ENCODE measurements at regions of chr6 and their contacts with region 1.

Region 1: DNA sequence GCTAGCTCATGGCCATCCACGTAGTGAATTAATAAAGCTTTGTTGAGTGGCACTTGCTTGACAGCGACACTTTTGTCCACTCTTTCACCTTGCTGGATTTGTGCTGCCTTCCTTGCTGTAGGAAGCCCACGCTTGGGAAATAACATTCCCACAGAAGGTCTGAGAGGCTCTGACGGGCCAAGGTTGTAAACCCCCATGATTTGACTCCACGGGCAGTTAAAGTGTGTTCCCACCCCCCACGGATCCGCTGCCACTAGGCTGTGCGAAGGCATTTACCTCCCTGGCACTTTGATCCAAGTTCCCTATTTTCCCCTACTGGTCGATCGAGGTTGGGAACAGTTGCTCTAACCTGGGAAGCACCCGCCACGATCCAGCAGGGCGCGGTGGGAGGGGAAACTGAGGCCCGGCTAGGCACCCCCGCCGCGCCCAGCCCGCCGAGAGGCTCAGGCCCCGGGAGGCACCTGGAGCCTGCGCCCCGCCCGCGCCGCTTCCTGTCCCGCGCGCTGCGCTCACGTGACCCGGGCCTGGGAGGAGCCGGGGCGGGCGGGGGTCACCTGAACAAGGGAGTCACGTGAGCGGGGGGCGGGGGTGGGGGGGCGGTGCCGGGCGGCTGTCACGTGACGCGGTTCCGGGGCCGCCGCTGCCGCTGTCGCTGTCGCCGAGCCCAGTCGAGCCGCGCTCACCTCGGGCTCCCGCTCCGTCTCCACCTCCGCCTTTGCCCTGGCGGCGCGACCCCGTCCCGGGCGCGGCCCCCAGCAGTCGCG is at the start of gene IGF2R:
- DNase-seq: peak; percentile 86 to 96 (median 94)
- ATAC-seq: peak; percentile 85
- H3K4me3 ChIP-seq: peak within 1 kb of the TSS; percentile 64 to 67
- H3K4me3 Mint-ChIP-seq: peak within 1 kb of the TSS; percentile 91
- H3K27ac ChIP-seq: peak within 1 kb of the TSS; percentile 59 to 82
- H3K27ac Mint-ChIP-seq: peak within 1 kb of the TSS; percentile 89
- H3K4me1 ChIP-seq: peaks cover 36% of the 10 kb centered on the region
- H3K4me1 Mint-ChIP-seq: peaks cover 42% of the 10 kb centered on the region
- H3K27me3 ChIP-seq: no peaks in the 10 kb centered on the region
- H3K27me3 Mint-ChIP-seq: no peaks in the 10 kb centered on the region
- CTCF ChIP-seq: no peak
- total RNA-seq, gene IGF2R: 38.5 to 40.6 TPM

Region 2: DNA sequence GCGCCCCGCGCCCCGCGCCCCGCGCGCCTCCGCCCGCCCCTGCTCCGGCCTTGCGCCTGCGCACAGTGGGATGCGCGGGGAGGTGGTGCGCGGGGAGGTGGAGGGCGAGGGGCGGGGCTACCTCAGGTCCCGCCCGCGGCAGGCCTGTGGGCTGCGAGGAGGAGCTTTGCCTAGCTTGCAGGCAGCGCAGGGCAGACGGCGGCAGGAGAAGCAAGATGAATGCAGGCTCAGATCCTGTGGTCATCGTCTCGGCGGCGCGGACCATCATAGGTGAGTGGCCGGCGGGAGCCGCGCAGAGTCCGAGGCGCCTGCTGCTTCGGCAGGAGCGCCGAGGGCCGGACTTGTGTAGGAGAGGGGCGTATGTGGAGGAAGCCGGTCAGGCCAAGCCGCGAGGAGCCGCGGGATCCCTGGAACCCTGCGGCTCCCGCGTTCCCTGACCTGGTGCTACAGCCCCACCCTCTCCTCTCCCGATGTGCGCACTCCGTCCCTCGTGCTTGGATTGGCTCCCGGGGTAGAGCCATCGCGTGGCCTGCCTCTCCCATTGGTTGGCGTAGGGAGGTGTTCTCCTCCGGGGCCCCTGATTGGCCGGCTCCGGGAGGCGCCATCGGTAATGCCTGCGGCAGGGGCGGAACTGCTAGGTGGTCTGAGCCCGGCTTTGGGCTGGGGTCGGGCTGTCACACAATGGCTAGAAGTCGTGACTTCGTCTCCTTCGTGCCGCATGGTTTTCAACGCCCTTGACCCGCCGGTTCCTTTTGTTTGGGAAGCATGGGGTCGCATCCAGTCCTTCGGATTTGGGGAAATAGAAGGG is 206.5 kb before region 1 on chr6 and contains the start of gene ACAT2:
- CTCF ChIA-PET with region 1: no interaction called
- POLR2A ChIA-PET with region 1: no interaction called
- intact Hi-C with region 1: loop called in 1 of 2 experiments (anchors 2 kb)
- DNase-seq: peak; percentile 81 to 96 (median 91)
- ATAC-seq: peak; percentile 86
- H3K4me3 ChIP-seq: peak within 1 kb of the TSS; percentile 85 to 99
- H3K4me3 Mint-ChIP-seq: peak within 1 kb of the TSS; percentile 96
- H3K27ac ChIP-seq: peak within 1 kb of the TSS; percentile 97 to 99
- H3K27ac Mint-ChIP-seq: peak within 1 kb of the TSS; percentile 97
- H3K4me1 ChIP-seq: peaks cover 16% of the 10 kb centered on the region
- H3K4me1 Mint-ChIP-seq: peaks cover 29% of the 10 kb centered on the region
- H3K27me3 ChIP-seq: no peaks in the 10 kb centered on the region
- H3K27me3 Mint-ChIP-seq: no peaks in the 10 kb centered on the region
- CTCF ChIP-seq: no peak
- total RNA-seq, gene ACAT2: 23.3 to 24.1 TPM

Region 3: GRCh38 chr6:159979136-159979874 is 10.7 kb after region 1 on chr6:
- CTCF ChIA-PET with region 1: interaction called, 6 read pairs
- POLR2A ChIA-PET with region 1: interaction called, 11 read pairs
- intact Hi-C with region 1: loop called in 1 of 2 experiments (anchors 2 kb)
- DNase-seq: peak in 7 of 9 experiments; percentile 49 to 85 (median 62)
- ATAC-seq: peak; percentile 79
- H3K4me3 ChIP-seq: peak overlapping the region in 1 of 2 experiments; percentile 16
- H3K4me3 Mint-ChIP-seq: peak overlapping the region; percentile 70
- H3K27ac ChIP-seq: peak overlapping the region; percentile 29 to 87
- H3K27ac Mint-ChIP-seq: peak overlapping the region; percentile 85
- H3K4me1 ChIP-seq: peaks cover 83% of the 10 kb centered on the region
- H3K4me1 Mint-ChIP-seq: peaks cover 95% of the 10 kb centered on the region
- H3K27me3 ChIP-seq: no peaks in the 10 kb centered on the region
- H3K27me3 Mint-ChIP-seq: no peaks in the 10 kb centered on the region
- CTCF ChIP-seq: no peak

Region 4: DNA sequence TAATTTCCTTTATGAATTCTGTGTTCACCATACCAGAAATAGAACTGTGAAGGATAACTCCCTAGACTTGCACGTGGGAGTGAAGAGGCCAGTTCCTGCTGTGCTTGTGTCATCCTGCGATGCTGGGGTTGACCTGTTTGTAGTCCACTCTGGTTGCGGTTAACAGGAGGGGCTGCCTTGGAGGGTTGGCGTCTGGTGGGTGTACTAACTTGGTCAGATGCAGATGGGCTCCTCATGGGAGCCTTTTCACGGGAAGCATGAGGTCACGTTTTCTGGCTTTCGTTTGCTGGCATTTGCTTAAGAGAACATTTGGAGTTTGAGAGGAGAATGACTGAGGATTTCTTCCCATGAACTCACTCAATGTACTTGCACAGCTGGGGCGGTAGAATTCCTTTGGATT is 41.4 kb after region 1 on chr6:
- CTCF ChIA-PET with region 1: no interaction called
- POLR2A ChIA-PET with region 1: interaction called, 3 read pairs
- intact Hi-C with region 1: loop called in 1 of 2 experiments (anchors 2 kb)
- DNase-seq: no peak
- ATAC-seq: no peak
- H3K4me3 ChIP-seq: no peak overlapping the region
- H3K4me3 Mint-ChIP-seq: no peak overlapping the region
- H3K27ac ChIP-seq: no peak overlapping the region
- H3K27ac Mint-ChIP-seq: no peak overlapping the region
- H3K4me1 ChIP-seq: peaks cover 29% of the 10 kb centered on the region
- H3K4me1 Mint-ChIP-seq: peaks cover 47% of the 10 kb centered on the region
- H3K27me3 ChIP-seq: no peaks in the 10 kb centered on the region
- H3K27me3 Mint-ChIP-seq: no peaks in the 10 kb centered on the region
- CTCF ChIP-seq: no peak

Region 5: GRCh38 chr6:160462551-160463109 is 494.0 kb after region 1 on chr6:
- CTCF ChIA-PET with region 1: no interaction called
- POLR2A ChIA-PET with region 1: no interaction called
- intact Hi-C with region 1: loop called (anchors 2 to 10 kb)
- DNase-seq: peak in 8 of 9 experiments; percentile 35 to 92 (median 61)
- ATAC-seq: peak; percentile 89
- H3K4me3 ChIP-seq: peak overlapping the region; percentile 2 to 34
- H3K4me3 Mint-ChIP-seq: peak overlapping the region; percentile 32
- H3K27ac ChIP-seq: peak overlapping the region in 1 of 2 experiments; percentile 43
- H3K27ac Mint-ChIP-seq: peak overlapping the region; percentile 57
- H3K4me1 ChIP-seq: peaks cover 46% of the 10 kb centered on the region
- H3K4me1 Mint-ChIP-seq: peaks cover 82% of the 10 kb centered on the region
- H3K27me3 ChIP-seq: no peaks in the 10 kb centered on the region
- H3K27me3 Mint-ChIP-seq: peaks cover 42% of the 10 kb centered on the region
- CTCF ChIP-seq: no peak

Region 6: DNA sequence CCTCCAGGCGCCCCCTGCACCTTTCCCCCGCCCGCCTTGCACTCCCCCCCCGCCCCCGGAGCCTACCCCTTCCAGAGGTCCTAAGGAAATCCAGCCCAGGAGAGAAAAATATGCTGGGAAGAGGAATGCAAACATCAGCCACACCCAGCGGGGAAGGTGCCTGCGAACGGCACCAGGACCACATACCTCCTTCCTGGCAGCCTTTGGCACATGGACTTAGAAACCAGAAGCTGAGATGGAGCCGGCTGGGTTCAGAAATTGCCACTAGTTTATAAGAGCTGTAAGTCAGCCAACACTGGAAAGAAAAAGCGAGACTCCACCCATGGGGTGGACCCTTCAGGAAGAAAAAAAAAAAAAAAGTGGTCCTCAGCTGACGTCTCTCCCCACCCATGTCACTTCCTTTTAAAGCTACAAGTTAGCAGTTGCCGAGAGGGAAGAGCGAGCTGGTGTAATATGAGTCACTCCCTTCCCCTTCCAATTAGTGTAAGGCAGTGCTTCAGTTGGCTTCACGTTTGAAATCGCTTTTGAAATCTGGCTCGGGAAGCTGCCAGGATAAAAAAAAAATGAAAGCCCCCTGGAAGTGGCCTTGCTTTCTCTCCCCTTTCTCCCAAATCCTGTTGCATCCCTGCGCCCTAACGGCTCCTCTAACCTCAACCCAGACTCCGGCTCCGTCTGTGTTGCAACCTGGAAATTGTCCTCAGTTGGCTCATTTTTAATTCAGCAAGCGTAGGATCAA is 1305.3 kb after region 1 on chr6 and contains the start of gene AGPAT4:
- CTCF ChIA-PET with region 1: no interaction called
- POLR2A ChIA-PET with region 1: no interaction called
- intact Hi-C with region 1: loop called in 1 of 2 experiments (anchors 10 kb)
- DNase-seq: peak; percentile 39 to 95 (median 63)
- ATAC-seq: peak; percentile 94
- H3K4me3 ChIP-seq: peak within 1 kb of the TSS; percentile 61 to 72
- H3K4me3 Mint-ChIP-seq: peak within 1 kb of the TSS; percentile 90
- H3K27ac ChIP-seq: peak within 1 kb of the TSS; percentile 61 to 85
- H3K27ac Mint-ChIP-seq: peak within 1 kb of the TSS; percentile 91
- H3K4me1 ChIP-seq: peaks cover 14% of the 10 kb centered on the region
- H3K4me1 Mint-ChIP-seq: peaks cover 21% of the 10 kb centered on the region
- H3K27me3 ChIP-seq: no peaks in the 10 kb centered on the region
- H3K27me3 Mint-ChIP-seq: no peaks in the 10 kb centered on the region
- CTCF ChIP-seq: no peak
- total RNA-seq, gene AGPAT4: 1.2 to 2.8 TPM